ENCODE measurements at regions of chr6 and their contacts with region 1.

Region 1: DNA sequence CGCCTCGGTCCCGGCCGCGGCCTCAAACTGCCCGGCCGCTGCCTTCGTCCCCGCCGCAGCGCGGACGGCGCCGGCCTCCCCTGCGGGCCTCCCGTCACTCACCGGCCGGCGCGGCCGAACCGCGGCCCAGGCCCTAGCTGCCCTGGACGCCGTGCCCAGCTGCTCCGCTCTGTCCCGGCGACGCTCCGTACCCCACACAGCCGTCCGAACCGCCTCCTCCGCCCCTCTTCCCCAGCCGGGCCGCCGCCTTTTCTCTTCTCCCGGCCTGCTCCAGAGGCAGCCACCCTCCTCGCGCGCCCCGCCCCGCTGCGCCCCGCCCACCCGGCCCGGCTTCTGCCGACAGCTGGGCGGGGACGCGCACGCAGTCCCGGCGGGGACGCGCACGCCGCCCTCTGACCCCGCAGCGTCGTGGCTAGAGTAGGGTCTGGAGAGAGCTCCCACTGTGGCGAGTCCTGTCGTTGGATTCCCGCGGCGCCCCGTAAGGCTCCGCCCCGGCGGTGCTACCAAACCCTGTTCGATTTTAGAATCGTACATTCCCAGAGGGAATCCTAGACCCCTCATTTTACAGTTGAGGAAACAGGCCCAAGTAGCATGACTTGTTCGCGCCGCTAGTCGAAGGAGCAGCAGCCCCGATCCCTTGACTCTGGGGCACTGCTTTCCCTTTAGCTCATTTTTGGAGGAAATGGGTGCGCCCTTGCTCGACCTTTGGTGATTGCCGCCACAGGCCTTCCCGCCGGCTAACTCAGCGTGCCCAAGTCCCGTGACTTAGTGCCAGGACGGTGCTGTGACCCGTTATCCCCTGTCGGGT is at the start of gene FBXO30:
- DNase-seq: peak; percentile 72 to 96 (median 83)
- ATAC-seq: peak; percentile 87
- H3K4me3 ChIP-seq: peak within 1 kb of the TSS; percentile 91
- H3K4me3 Mint-ChIP-seq: peak within 1 kb of the TSS; percentile 98
- H3K27ac ChIP-seq: peak within 1 kb of the TSS; percentile 68 to 85
- H3K27ac Mint-ChIP-seq: peak within 1 kb of the TSS; percentile 94
- H3K4me1 ChIP-seq: peaks cover 19% of the 10 kb centered on the region
- H3K4me1 Mint-ChIP-seq: peaks cover 68% of the 10 kb centered on the region
- H3K27me3 ChIP-seq: no peaks in the 10 kb centered on the region
- H3K27me3 Mint-ChIP-seq: no peaks in the 10 kb centered on the region
- CTCF ChIP-seq: no peak
- total RNA-seq, gene FBXO30: 1.3 to 1.4 TPM

Region 2: GRCh38 chr6:144343701-144344428 is 1470.8 kb before region 1 on chr6:
- CTCF ChIA-PET with region 1: no interaction called
- POLR2A ChIA-PET with region 1: no interaction called
- intact Hi-C with region 1: no loop called
- DNase-seq: peak in 11 of 14 experiments; percentile 30 to 91 (median 48)
- ATAC-seq: peak; percentile 74
- H3K4me3 ChIP-seq: peak overlapping the region; percentile 72
- H3K4me3 Mint-ChIP-seq: peak overlapping the region; percentile 88
- H3K27ac ChIP-seq: peak overlapping the region; percentile 56 to 75
- H3K27ac Mint-ChIP-seq: peak overlapping the region; percentile 89
- H3K4me1 ChIP-seq: peaks cover 58% of the 10 kb centered on the region
- H3K4me1 Mint-ChIP-seq: peaks cover 73% of the 10 kb centered on the region
- H3K27me3 ChIP-seq: no peaks in the 10 kb centered on the region
- H3K27me3 Mint-ChIP-seq: no peaks in the 10 kb centered on the region
- CTCF ChIP-seq: no peak

Region 3: GRCh38 chr6:145734486-145735355 is 80.0 kb before region 1 on chr6:
- CTCF ChIA-PET with region 1: interaction called, 3 read pairs
- POLR2A ChIA-PET with region 1: interaction called, 60 read pairs
- intact Hi-C with region 1: loop called (anchors 2 kb)
- DNase-seq: peak; percentile 33 to 75 (median 54)
- ATAC-seq: peak; percentile 59
- H3K4me3 ChIP-seq: peak overlapping the region; percentile 71
- H3K4me3 Mint-ChIP-seq: peak overlapping the region; percentile 100
- H3K27ac ChIP-seq: peak overlapping the region; percentile 6 to 13
- H3K27ac Mint-ChIP-seq: peak overlapping the region; percentile 100
- H3K4me1 ChIP-seq: no peaks in the 10 kb centered on the region
- H3K4me1 Mint-ChIP-seq: peaks cover 16% of the 10 kb centered on the region
- H3K27me3 ChIP-seq: no peaks in the 10 kb centered on the region
- H3K27me3 Mint-ChIP-seq: no peaks in the 10 kb centered on the region
- CTCF ChIP-seq: no peak

Region 4: DNA sequence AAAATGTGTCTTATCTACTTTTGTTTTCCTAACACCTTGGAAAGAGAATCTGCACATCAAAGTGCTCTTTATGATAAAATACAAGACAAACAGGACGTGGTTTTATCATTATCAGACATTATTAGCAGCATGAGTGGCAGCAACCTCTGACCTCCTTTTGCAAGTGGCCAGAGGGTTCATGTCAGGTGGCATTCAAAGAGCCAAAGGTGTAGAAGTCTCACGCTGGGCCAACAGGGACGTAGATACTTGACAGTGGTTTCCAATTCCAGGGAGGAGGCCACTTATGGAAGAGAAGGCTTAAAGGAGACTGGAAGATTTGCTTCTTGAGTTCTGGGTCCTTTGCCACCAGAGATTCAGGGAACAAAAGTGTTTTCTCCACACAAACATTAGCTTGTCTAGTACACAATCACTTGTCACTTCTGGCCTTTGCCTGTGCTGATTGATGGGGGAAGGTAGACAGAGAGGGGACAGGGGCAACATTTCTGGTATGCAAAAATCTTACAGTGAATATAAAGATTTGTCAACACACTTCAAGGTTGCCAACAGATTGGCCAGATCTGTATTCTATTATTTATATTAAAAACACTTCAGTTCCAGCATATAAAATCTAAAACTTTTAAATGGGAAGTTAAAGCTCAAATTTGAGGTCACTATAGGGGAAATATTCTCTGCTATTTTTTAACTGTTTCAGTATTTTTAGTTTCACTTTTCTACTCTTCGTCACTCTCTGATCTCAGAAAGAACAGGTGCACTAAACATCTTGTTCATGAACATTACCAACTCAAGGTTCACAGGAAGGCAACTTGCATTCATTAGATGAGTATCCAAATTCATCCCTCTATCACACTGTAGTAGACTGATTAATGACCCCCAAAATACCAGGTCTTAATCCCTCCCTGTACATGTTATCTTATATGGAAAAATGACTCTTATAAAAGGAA is 52.0 kb after region 1 on chr6:
- CTCF ChIA-PET with region 1: no interaction called
- POLR2A ChIA-PET with region 1: interaction called, 22 read pairs
- intact Hi-C with region 1: no loop called
- DNase-seq: peak in 4 of 14 experiments; percentile 7 to 65 (median 30)
- ATAC-seq: peak; percentile 72
- H3K4me3 ChIP-seq: no peak overlapping the region
- H3K4me3 Mint-ChIP-seq: peak overlapping the region; percentile 50
- H3K27ac ChIP-seq: peak overlapping the region; percentile 26 to 33
- H3K27ac Mint-ChIP-seq: peak overlapping the region; percentile 81
- H3K4me1 ChIP-seq: peaks cover 18% of the 10 kb centered on the region
- H3K4me1 Mint-ChIP-seq: peaks cover 39% of the 10 kb centered on the region
- H3K27me3 ChIP-seq: no peaks in the 10 kb centered on the region
- H3K27me3 Mint-ChIP-seq: no peaks in the 10 kb centered on the region
- CTCF ChIP-seq: no peak

Region 5: GRCh38 chr6:145963216-145964068 is 148.7 kb after region 1 on chr6:
- CTCF ChIA-PET with region 1: no interaction called
- POLR2A ChIA-PET with region 1: interaction called, 41 read pairs
- intact Hi-C with region 1: loop called (anchors 2 kb)
- DNase-seq: peak; percentile 5 to 64 (median 26)
- ATAC-seq: peak; percentile 15
- H3K4me3 ChIP-seq: peak overlapping the region; percentile 76
- H3K4me3 Mint-ChIP-seq: peak overlapping the region; percentile 96
- H3K27ac ChIP-seq: no peak overlapping the region
- H3K27ac Mint-ChIP-seq: peak overlapping the region; percentile 98
- H3K4me1 ChIP-seq: peaks cover 7% of the 10 kb centered on the region
- H3K4me1 Mint-ChIP-seq: peaks cover 58% of the 10 kb centered on the region
- H3K27me3 ChIP-seq: no peaks in the 10 kb centered on the region
- H3K27me3 Mint-ChIP-seq: no peaks in the 10 kb centered on the region
- CTCF ChIP-seq: no peak

Region 6: DNA sequence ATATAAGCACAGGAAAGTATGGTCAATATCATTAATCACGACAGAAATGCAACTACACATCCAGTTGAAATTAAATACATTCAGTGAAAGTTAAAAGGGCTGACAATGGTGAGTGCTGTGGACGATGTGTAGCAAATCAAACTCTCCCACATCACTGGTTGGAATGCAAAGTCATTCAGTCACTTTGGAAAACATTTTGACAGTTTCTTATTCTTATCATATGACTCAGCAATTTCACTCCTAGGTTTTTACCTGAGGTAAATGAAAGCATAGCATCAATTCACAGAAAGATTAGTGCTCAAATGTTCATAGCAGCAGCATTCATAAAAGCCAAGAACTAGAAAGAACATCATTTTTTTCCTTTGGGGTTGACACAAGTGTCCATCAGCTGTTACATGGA is 1665.2 kb after region 1 on chr6:
- CTCF ChIA-PET with region 1: no interaction called
- POLR2A ChIA-PET with region 1: no interaction called
- intact Hi-C with region 1: no loop called
- DNase-seq: no peak
- ATAC-seq: no peak
- H3K4me3 ChIP-seq: no peak overlapping the region
- H3K4me3 Mint-ChIP-seq: no peak overlapping the region
- H3K27ac ChIP-seq: no peak overlapping the region
- H3K27ac Mint-ChIP-seq: no peak overlapping the region
- H3K4me1 ChIP-seq: no peaks in the 10 kb centered on the region
- H3K4me1 Mint-ChIP-seq: no peaks in the 10 kb centered on the region
- H3K27me3 ChIP-seq: no peaks in the 10 kb centered on the region
- H3K27me3 Mint-ChIP-seq: no peaks in the 10 kb centered on the region
- CTCF ChIP-seq: no peak

Measured in CD4-positive, alpha-beta T cell (primary cell).